MCF 10A (cell line): ENCODE measurements at regions of chr7 and their contacts with region 1.

Region 1: GRCh38 chr7:79593866-79594301 is 140.4 kb upstream of the MAGI2 start:
- DNase-seq: no peak
- H3K4me3 Mint-ChIP-seq: no peak overlapping the region
- H3K27ac Mint-ChIP-seq: no peak overlapping the region
- H3K4me1 Mint-ChIP-seq: no peaks in the 10 kb centered on the region
- H3K27me3 Mint-ChIP-seq: peaks cover 84% of the 10 kb centered on the region
- CTCF ChIP-seq: no peak

Region 2: DNA sequence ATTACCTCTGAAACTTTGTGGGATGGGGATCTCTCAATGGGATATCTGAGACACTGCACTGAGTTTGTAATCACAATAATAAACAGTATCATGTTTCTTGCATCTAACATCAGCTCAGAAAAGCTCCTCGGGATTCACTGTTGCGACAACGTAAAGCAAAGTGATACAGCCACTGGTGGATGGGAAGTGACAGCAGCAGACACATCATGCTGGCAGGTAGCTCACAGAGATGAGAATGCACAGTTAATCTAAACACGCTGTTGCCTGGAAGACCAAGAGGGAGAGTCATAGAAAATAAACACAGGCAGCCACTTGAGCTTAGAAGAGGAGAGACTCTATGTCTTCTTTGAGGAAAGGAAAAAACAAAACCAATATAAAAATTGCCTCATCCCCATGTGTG is 654.2 kb before region 1 on chr7:
- CTCF ChIA-PET with region 1: no interaction called
- POLR2A ChIA-PET with region 1: no interaction called
- intact Hi-C with region 1: no loop called
- DNase-seq: no peak
- H3K4me3 Mint-ChIP-seq: no peak overlapping the region
- H3K27ac Mint-ChIP-seq: no peak overlapping the region
- H3K4me1 Mint-ChIP-seq: no peaks in the 10 kb centered on the region
- H3K27me3 Mint-ChIP-seq: peaks cover 61% of the 10 kb centered on the region
- CTCF ChIP-seq: no peak

Region 3: GRCh38 chr7:79434098-79434497 is 159.8 kb before region 1 on chr7:
- CTCF ChIA-PET with region 1: no interaction called
- POLR2A ChIA-PET with region 1: no interaction called
- intact Hi-C with region 1: loop called (anchors 10 kb)
- DNase-seq: no peak
- H3K4me3 Mint-ChIP-seq: no peak overlapping the region
- H3K27ac Mint-ChIP-seq: no peak overlapping the region
- H3K4me1 Mint-ChIP-seq: no peaks in the 10 kb centered on the region
- H3K27me3 Mint-ChIP-seq: peaks cover 36% of the 10 kb centered on the region
- CTCF ChIP-seq: no peak